ENCODE measurements at regions of chr15 and their contacts with region 1.

Region 1: DNA sequence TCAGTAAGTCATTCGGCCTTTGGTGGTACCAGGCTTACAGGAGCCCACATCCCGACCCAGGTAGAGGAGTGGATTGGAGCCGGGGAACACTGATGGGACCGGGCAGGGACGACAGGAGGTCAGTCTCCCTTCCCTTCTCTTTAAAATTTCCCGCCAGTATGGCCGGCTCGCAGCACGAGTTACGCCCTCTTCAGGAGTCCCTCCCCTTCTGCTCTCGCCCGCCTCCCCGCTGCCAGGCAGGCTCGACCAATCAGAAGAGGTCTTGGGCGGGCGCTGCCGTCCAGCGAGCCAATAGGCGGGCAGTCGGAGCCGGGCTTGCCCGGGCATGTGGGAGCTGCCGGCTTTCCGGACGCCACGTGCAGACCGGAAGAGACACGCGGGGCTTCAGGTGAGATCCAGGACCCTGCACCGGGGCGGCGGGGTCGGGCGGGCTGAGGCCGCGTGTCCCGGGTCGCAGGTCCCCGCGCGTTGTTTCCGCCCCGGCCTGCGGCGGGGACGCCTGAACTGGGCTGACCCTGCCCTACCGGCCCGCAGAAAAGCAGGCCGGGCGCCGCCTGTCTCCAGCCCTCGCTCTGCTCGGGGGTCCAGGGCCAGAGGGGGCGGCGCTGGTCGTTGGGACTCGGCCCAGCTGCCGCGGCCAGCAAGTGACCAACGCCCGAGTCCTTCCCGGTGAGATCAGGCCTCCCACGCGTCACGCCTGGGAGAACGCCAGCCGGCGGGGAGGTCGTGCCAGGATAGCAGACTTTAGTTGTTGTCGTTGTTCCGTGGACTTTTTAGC is at the start of gene AEN:
- DNase-seq: peak; percentile 96
- ATAC-seq: peak; percentile 97
- H3K4me3 ChIP-seq: peak within 1 kb of the TSS; percentile 56 to 88 (median 80)
- H3K4me3 Mint-ChIP-seq: peak within 1 kb of the TSS; percentile 85
- H3K27ac ChIP-seq: peak within 1 kb of the TSS; percentile 72 to 86
- H3K27ac Mint-ChIP-seq: peak within 1 kb of the TSS; percentile 94
- H3K4me1 ChIP-seq: peaks cover 36 to 50% of the 10 kb centered on the region in 2 donors
- H3K4me1 Mint-ChIP-seq: peaks cover 47% of the 10 kb centered on the region
- H3K27me3 ChIP-seq: peaks cover 0 to 3% (median 0%) of the 10 kb centered on the region in 4 experiments
- H3K27me3 Mint-ChIP-seq: peaks cover 4% of the 10 kb centered on the region
- CTCF ChIP-seq: no peak
- total RNA-seq, gene AEN: 18.5 and 24.0 TPM in 2 replicates

Region 2: DNA sequence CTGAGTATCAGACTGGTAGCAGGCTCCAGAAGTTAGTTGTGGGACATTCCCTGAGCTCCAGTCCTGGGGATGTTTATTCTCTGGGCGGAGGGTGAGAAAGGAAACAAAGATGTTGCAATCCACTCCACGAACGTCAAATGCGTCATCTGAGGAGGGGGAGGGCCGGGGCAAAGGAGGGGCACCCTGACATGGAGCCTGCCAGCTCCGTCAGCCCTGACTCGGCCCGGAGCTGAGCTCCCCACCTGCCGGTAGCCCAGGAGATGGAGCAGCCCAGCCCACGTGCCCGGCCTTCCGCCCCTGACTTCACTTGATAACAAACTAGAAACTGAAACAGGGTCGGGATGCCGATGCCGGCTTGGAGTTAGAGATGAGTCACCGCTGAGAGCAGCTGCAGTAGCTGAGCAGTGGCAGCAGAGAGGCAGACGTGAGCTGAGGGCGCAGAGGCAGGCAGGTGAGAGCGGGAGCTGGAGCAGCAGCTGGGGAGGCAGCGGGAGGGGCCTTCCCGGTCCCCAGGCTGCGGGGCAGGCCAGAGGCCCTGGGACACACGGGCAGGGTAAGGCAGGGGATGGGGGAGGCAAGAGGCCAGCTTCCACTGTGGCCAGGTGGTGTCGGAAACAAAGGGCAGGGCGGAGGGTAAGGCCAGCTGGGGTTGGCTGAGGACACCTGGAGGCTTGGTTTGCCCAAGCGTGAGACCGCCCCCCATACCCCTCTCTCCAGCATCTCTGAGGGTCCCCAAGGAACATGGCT is 17.6 kb after region 1 on chr15 and contains the start of gene ISG20:
- CTCF ChIA-PET with region 1: interaction called, 56 read pairs
- POLR2A ChIA-PET with region 1: interaction called, 6 read pairs
- intact Hi-C with region 1: loop called (anchors 1 kb)
- DNase-seq: peak; percentile 98
- ATAC-seq: peak; percentile 74
- H3K4me3 ChIP-seq: peak within 1 kb of the TSS; percentile 48 to 76 (median 74)
- H3K4me3 Mint-ChIP-seq: peak within 1 kb of the TSS; percentile 93
- H3K27ac ChIP-seq: peak within 1 kb of the TSS; percentile 97 to 99
- H3K27ac Mint-ChIP-seq: peak within 1 kb of the TSS; percentile 98
- H3K4me1 ChIP-seq: peaks cover 79 to 91% of the 10 kb centered on the region in 2 donors
- H3K4me1 Mint-ChIP-seq: peaks cover 76% of the 10 kb centered on the region
- H3K27me3 ChIP-seq: no peaks in the 10 kb centered on the region
- H3K27me3 Mint-ChIP-seq: no peaks in the 10 kb centered on the region
- CTCF ChIP-seq: peak; percentile 53
- total RNA-seq, gene ISG20: 173 and 190 TPM in 2 replicates

Region 3: DNA sequence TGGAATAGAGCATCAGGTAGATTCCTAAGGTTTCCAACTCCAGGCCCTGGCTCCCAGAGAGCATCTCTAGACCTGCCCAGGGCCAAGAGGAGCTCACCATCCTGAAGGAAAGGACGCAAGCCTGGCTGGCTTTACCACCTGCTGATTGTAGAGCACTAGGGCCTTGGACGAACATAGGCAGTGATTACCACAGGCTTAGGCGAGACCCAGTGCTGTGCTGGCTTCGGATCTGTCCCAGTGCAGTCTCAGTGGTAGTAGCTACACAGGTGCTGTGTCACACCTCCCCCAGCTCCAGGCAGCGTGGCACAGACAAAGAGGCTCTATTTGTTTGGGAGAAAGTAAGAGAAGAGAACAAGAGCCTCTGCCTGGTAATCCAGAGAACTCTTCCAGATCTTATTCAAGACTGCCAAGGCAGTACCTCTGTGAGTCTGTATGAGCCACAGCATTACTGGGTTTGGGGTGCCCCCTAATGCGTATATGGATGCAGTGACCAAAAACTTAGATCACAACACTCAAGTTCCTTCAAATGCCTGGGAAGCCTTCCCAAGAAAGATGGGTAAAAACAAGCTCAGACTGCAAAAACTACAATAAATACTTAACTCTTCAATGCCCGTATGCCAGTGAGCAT is 43.1 kb after region 1 on chr15:
- CTCF ChIA-PET with region 1: interaction called, 162 read pairs
- POLR2A ChIA-PET with region 1: interaction called, 4 read pairs
- intact Hi-C with region 1: loop called (anchors 1 kb)
- DNase-seq: peak; percentile 72
- ATAC-seq: peak; percentile 79
- H3K4me3 ChIP-seq: no peak overlapping the region
- H3K4me3 Mint-ChIP-seq: no peak overlapping the region
- H3K27ac ChIP-seq: no peak overlapping the region
- H3K27ac Mint-ChIP-seq: peak overlapping the region; percentile 78
- H3K4me1 ChIP-seq: peaks cover 13 to 14% of the 10 kb centered on the region in 2 donors
- H3K4me1 Mint-ChIP-seq: peaks cover 25% of the 10 kb centered on the region
- H3K27me3 ChIP-seq: no peaks in the 10 kb centered on the region
- H3K27me3 Mint-ChIP-seq: peaks cover 7% of the 10 kb centered on the region
- CTCF ChIP-seq: peak; percentile 68

Region 4: DNA sequence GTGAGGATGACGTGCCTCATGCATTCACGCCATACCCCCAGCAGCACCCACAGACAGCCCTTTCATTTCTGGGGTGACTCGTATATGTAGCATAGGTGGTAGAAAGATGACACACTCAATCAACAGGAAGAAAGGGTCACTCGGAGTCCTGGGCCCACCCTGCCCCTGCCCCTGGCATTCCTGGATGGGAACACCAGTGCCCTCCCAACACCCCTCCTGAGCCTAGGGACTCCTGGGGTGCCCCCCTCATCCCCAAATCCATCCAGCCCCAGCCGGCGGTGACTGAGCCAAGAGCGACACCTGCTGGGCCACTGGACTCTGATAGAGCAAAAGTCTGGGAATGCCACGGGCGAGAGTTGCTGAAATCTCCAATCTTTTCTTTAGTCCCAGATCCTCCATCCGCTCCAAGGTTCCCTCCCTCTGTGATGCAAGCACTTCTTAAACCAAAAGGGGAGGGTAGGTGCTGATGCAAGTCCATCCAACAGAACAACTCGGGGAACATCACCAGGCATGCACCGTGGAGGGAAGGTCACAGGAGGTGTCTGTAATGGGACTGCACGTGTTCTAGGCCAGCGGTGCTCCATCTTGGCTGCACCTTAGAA is 213.1 kb after region 1 on chr15:
- CTCF ChIA-PET with region 1: interaction called, 43 read pairs
- POLR2A ChIA-PET with region 1: no interaction called
- intact Hi-C with region 1: no loop called
- DNase-seq: peak; percentile 48
- ATAC-seq: no peak
- H3K4me3 ChIP-seq: no peak overlapping the region
- H3K4me3 Mint-ChIP-seq: no peak overlapping the region
- H3K27ac ChIP-seq: no peak overlapping the region
- H3K27ac Mint-ChIP-seq: no peak overlapping the region
- H3K4me1 ChIP-seq: peaks cover 0 to 3% of the 10 kb centered on the region in 2 donors
- H3K4me1 Mint-ChIP-seq: no peaks in the 10 kb centered on the region
- H3K27me3 ChIP-seq: peaks cover 0 to 5% (median 0%) of the 10 kb centered on the region in 4 experiments
- H3K27me3 Mint-ChIP-seq: peaks cover 3% of the 10 kb centered on the region
- CTCF ChIP-seq: peak; percentile 47

Region 5: GRCh38 chr15:89087830-89088604 is 466.8 kb after region 1 on chr15 and contains the start of gene ABHD2:
- CTCF ChIA-PET with region 1: interaction called, 3 read pairs
- POLR2A ChIA-PET with region 1: no interaction called
- intact Hi-C with region 1: loop called (anchors 1 kb)
- DNase-seq: peak; percentile 98
- ATAC-seq: peak; percentile 96
- H3K4me3 ChIP-seq: peak within 1 kb of the TSS; percentile 75 to 97 (median 93)
- H3K4me3 Mint-ChIP-seq: no peak within 1 kb of the TSS
- H3K27ac ChIP-seq: peak within 1 kb of the TSS; percentile 42 to 68
- H3K27ac Mint-ChIP-seq: no peak within 1 kb of the TSS
- H3K4me1 ChIP-seq: peaks cover 35 to 42% of the 10 kb centered on the region in 2 donors
- H3K4me1 Mint-ChIP-seq: peaks cover 30% of the 10 kb centered on the region
- H3K27me3 ChIP-seq: no peaks in the 10 kb centered on the region
- H3K27me3 Mint-ChIP-seq: no peaks in the 10 kb centered on the region
- CTCF ChIP-seq: no peak
- total RNA-seq, gene ABHD2: 40.9 and 45.8 TPM in 2 replicates

Region 6: GRCh38 chr15:89575146-89575655 is 954.0 kb after region 1 on chr15 and contains the start of gene TICRR:
- CTCF ChIA-PET with region 1: no interaction called
- POLR2A ChIA-PET with region 1: no interaction called
- intact Hi-C with region 1: loop called (anchors 5 kb)
- DNase-seq: peak; percentile 98
- ATAC-seq: peak; percentile 97
- H3K4me3 ChIP-seq: peak within 1 kb of the TSS; percentile 69 to 91 (median 86)
- H3K4me3 Mint-ChIP-seq: peak within 1 kb of the TSS; percentile 82
- H3K27ac ChIP-seq: no peak within 1 kb of the TSS
- H3K27ac Mint-ChIP-seq: peak within 1 kb of the TSS; percentile 57
- H3K4me1 ChIP-seq: peaks cover 6 to 15% of the 10 kb centered on the region in 2 donors
- H3K4me1 Mint-ChIP-seq: peaks cover 11% of the 10 kb centered on the region
- H3K27me3 ChIP-seq: peaks cover 0 to 5% (median 0%) of the 10 kb centered on the region in 4 experiments
- H3K27me3 Mint-ChIP-seq: peaks cover 16% of the 10 kb centered on the region
- CTCF ChIP-seq: no peak
- total RNA-seq, gene TICRR: 0.05 TPM in 1 of 2 replicates, not detected in the other